Endothelial cell of umbilical vein (primary cell): ENCODE measurements at regions of chr17 and their contacts with region 1.

Region 1: DNA sequence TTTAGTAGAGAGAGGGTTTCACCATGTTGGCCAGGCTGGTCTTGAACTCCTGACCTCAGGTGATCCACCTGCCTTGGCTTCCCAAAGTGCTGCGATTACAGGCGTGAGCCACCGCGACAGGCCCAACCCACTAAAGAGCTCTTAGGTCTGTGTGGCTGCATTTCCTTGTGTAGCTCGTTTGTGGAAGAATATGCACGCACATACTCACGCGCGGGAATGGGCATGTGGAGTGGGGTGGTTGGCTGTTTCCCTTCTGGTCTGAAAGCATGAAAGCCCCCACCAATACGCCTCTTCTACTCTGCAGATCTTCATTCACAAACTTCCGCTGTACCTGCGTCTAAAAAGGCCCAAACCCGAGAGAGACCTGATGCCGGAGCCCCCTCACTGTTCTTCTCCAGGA is 10.1 kb downstream of the CHRNB1 start:
- DNase-seq: no peak
- H3K4me3 ChIP-seq: no peak overlapping the region
- H3K27ac ChIP-seq: no peak overlapping the region
- H3K4me1 ChIP-seq: no peaks in the 10 kb centered on the region
- H3K27me3 ChIP-seq: no peaks in the 10 kb centered on the region
- CTCF ChIP-seq: no peak
- POLR2A ChIP-seq: no peak

Region 2: GRCh38 chr17:7444682-7445618 is 10.0 kb before region 1 on chr17 and contains the start of gene CHRNB1:
- CTCF ChIA-PET with region 1: interaction called, 4 read pairs
- POLR2A ChIA-PET with region 1: no interaction called
- dilution Hi-C with region 1: no loop called
- intact Hi-C with region 1: loop called (anchors 1 kb)
- DNase-seq: peak; percentile 35
- H3K4me3 ChIP-seq: peak within 1 kb of the TSS; percentile 14 to 34 (median 25)
- H3K27ac ChIP-seq: no peak within 1 kb of the TSS
- H3K4me1 ChIP-seq: peaks cover 15% of the 10 kb centered on the region
- H3K27me3 ChIP-seq: peaks cover 22 to 30% of the 10 kb centered on the region in 2 experiments
- CTCF ChIP-seq: no peak
- POLR2A ChIP-seq: no peak
- total RNA-seq, gene CHRNB1: 5.4 and 5.6 TPM in 2 replicates

Region 3: DNA sequence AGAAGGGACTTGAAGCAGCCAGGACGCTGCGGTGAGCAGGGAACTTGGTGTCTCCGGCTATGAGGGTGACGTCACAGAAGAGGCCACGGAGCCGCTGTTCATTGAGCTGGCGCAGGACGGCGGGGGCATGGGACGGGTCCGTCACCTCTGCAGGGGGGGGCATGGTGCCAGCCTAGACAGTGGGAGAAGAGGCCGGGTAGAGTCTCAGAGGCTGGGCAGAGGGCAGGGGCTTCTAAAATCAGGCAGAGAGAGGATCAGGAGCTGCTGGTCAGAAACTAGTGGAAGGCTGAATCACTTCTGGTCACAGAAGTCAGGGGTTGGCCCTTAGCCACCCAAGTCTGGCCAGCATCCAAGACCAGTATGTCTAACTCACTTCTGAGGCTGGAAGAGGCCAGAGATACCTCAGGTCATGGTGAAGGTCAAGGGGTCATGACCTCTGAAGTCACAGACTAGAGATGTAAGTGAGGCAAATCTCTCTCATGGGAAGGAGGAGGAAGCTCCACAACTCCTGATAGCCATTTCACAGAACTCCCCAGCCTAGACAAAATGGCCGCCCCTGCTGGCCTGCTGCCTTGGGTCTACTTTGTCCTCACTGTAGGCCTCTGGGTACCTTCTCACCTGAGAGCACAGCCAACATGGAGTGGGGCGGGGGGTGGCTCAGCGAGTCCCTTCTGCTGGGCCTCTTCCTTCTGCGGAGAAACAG is 11.8 kb after region 1 on chr17:
- CTCF ChIA-PET with region 1: no interaction called
- POLR2A ChIA-PET with region 1: no interaction called
- dilution Hi-C with region 1: no loop called
- intact Hi-C with region 1: no loop called
- DNase-seq: peak; percentile 53
- H3K4me3 ChIP-seq: no peak overlapping the region
- H3K27ac ChIP-seq: no peak overlapping the region
- H3K4me1 ChIP-seq: no peaks in the 10 kb centered on the region
- H3K27me3 ChIP-seq: no peaks in the 10 kb centered on the region
- CTCF ChIP-seq: no peak
- POLR2A ChIP-seq: no peak

Region 4: DNA sequence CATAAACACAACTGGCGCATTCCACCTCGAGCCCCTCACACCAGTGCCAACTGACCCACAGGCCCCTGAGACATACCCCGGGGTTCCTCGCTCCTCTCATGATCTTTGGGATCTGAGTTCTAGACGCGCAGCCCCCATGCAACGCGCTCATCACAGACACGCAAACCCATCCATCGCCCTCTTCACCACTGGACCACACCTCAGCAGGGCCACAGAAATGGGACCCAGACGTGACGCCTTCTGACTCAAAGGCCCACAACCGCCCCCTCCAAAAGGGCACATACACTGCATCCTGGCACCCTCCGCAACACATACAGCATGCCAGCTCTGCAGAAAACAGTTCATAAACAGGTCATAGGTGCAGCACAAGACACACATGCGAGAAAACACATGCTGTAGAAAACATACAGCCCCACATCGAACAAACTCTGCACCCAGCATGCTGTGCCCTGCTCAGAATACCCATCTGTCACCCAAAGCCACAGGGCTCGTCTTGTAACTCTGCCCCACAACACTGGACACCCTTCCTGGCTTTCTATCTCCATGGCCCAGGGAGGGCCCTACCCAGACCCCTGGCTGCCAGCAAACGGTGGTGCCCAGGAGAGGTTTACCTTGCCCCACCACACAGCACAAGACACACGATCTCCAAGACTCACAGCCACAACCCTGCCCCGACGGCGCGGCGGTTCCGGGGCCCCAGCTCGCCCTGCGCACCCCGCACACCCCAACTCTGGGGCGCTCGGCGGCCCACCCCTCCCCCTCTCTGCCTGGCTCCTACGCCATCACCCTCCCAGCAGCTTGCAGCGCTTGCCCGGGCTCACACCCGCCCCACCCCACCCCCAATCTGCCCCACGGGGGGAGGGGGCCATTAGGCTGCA is 23.5 kb after region 1 on chr17:
- CTCF ChIA-PET with region 1: interaction called, 4 read pairs
- POLR2A ChIA-PET with region 1: no interaction called
- dilution Hi-C with region 1: no loop called
- intact Hi-C with region 1: loop called (anchors 1 kb)
- DNase-seq: peak; percentile 35
- H3K4me3 ChIP-seq: peak overlapping the region; percentile 49 to 91 (median 71)
- H3K27ac ChIP-seq: peak overlapping the region; percentile 58
- H3K4me1 ChIP-seq: peaks cover 38% of the 10 kb centered on the region
- H3K27me3 ChIP-seq: no peaks in the 10 kb centered on the region
- CTCF ChIP-seq: no peak
- POLR2A ChIP-seq: no peak